MCF 10A (cell line): ENCODE measurements at regions of chr13 and their contacts with region 1.

Region 1: GRCh38 chr13:95156208-95156607 is 145.0 kb downstream of the ABCC4 start:
- DNase-seq: peak; percentile 29
- H3K4me3 Mint-ChIP-seq: no peak overlapping the region
- H3K27ac Mint-ChIP-seq: no peak overlapping the region
- H3K4me1 Mint-ChIP-seq: peaks cover 7% of the 10 kb centered on the region
- H3K27me3 Mint-ChIP-seq: no peaks in the 10 kb centered on the region
- CTCF ChIP-seq: peak; percentile 62

Region 2: GRCh38 chr13:94630858-94631257 is 525.4 kb before region 1 on chr13:
- CTCF ChIA-PET with region 1: interaction called, 17 read pairs
- POLR2A ChIA-PET with region 1: no interaction called
- intact Hi-C with region 1: no loop called
- DNase-seq: no peak
- H3K4me3 Mint-ChIP-seq: no peak overlapping the region
- H3K27ac Mint-ChIP-seq: no peak overlapping the region
- H3K4me1 Mint-ChIP-seq: no peaks in the 10 kb centered on the region
- H3K27me3 Mint-ChIP-seq: no peaks in the 10 kb centered on the region
- CTCF ChIP-seq: no peak

Region 3: GRCh38 chr13:94674609-94675348 is 481.4 kb before region 1 on chr13:
- CTCF ChIA-PET with region 1: interaction called, 113 read pairs
- POLR2A ChIA-PET with region 1: interaction called, 5 read pairs
- intact Hi-C with region 1: loop called (anchors 1 kb)
- DNase-seq: peak; percentile 69
- H3K4me3 Mint-ChIP-seq: no peak overlapping the region
- H3K27ac Mint-ChIP-seq: no peak overlapping the region
- H3K4me1 Mint-ChIP-seq: no peaks in the 10 kb centered on the region
- H3K27me3 Mint-ChIP-seq: no peaks in the 10 kb centered on the region
- CTCF ChIP-seq: peak; percentile 70

Region 4: GRCh38 chr13:94950303-94950702 is 205.9 kb before region 1 on chr13:
- CTCF ChIA-PET with region 1: no interaction called
- POLR2A ChIA-PET with region 1: no interaction called
- intact Hi-C with region 1: no loop called
- DNase-seq: no peak
- H3K4me3 Mint-ChIP-seq: no peak overlapping the region
- H3K27ac Mint-ChIP-seq: no peak overlapping the region
- H3K4me1 Mint-ChIP-seq: no peaks in the 10 kb centered on the region
- H3K27me3 Mint-ChIP-seq: no peaks in the 10 kb centered on the region
- CTCF ChIP-seq: no peak

Region 5: DNA sequence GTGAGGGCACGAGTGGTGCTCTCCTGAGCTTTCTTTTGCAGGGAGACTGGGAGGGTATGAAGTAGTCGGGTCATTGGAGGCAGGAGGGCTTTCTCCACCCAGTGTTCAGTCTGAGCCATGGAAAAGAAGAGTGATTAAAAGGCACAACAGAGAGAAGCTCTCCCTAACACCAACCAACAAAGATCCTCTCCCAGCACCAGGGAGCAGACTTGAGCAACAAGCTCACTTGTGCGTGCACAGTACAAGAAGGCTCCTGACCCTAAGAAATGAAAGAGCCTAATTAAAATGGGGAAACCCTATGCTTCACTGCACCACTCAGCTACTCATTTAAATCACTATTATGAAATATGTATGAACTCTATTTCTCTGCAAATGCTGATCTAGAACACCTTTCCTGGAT is 167.6 kb before region 1 on chr13:
- CTCF ChIA-PET with region 1: interaction called, 12 read pairs
- POLR2A ChIA-PET with region 1: no interaction called
- intact Hi-C with region 1: loop called (anchors 5 kb)
- DNase-seq: peak; percentile 18
- H3K4me3 Mint-ChIP-seq: no peak overlapping the region
- H3K27ac Mint-ChIP-seq: no peak overlapping the region
- H3K4me1 Mint-ChIP-seq: no peaks in the 10 kb centered on the region
- H3K27me3 Mint-ChIP-seq: peaks cover 13% of the 10 kb centered on the region
- CTCF ChIP-seq: no peak